WTC11 (cell line): ENCODE measurements at regions of chr3 and their contacts with region 1.

Region 1: GRCh38 chr3:39126532-39127071 is 19.1 kb downstream of the TTC21A start:
- DNase-seq: peak; percentile 60
- ATAC-seq: peak; percentile 84
- H3K4me3 Mint-ChIP-seq: no peak overlapping the region
- H3K27ac Mint-ChIP-seq: no peak overlapping the region
- H3K4me1 Mint-ChIP-seq: peaks cover 5% of the 10 kb centered on the region; the same call in 1 of the 2 replicates
- H3K27me3 Mint-ChIP-seq: no peaks in the 10 kb centered on the region
- CTCF ChIP-seq: no peak

Region 2: DNA sequence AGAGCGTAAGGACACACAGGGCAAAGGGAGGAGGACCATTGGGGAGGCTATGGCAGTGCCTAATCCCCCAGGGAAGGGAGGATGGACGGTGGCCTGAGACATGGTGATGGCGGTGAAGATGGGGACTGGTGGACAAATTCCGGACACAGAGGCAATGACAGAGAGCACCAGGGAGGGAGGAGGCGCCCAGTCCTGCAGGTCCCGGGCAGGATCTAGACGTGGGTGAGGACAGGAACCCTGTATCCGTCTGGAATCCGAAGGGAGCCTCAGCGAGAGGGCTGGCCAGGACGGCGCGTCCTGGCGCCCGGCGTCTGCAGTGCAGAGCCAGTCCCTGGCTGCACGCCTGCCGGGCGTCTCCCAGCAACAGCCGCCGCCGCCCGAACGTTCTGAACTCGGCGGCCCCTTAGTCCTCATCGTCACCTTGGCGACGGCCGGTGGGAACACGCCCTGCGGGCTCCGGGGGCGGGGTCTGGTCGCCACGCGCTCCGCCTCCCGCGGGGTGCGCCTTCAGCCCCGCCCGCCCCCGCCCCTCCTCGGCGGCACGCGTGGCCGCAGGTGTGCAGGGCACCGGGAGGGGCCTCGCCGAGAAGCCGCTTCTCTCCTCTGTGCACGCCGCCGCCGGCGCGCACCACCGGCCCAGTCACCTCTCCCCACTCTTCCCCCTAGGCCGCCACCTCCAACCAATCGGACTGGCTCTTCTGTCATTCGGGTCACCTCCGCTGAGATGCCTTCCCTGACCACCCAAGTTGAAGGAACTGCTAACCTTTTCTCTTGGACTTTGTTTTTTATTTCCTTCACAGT is 54.1 kb after region 1 on chr3:
- CTCF ChIA-PET with region 1: interaction called, 72 read pairs
- POLR2A ChIA-PET with region 1: interaction called, 6 read pairs
- DNase-seq: peak; percentile 87
- ATAC-seq: peak; percentile 86
- H3K4me3 Mint-ChIP-seq: peak overlapping the region; percentile 72
- H3K27ac Mint-ChIP-seq: peak overlapping the region; percentile 96
- H3K4me1 Mint-ChIP-seq: peaks cover 35% of the 10 kb centered on the region
- H3K27me3 Mint-ChIP-seq: peaks cover 22% of the 10 kb centered on the region
- CTCF ChIP-seq: no peak

Region 3: DNA sequence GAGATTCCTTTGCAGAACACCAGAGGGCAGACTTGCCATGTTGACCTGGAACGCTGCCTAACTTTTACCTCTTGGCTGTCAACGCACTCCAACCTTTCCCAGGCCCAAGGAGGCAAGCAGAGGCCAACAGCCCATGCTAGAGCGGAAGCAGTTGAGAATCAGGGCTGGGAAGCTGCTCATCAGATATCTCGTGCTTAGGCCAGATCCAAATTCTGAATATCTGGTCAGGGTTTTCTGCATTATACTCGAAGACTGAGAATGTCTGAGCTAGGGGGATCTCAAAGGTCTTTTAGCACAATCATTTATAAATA is 63.3 kb after region 1 on chr3:
- CTCF ChIA-PET with region 1: interaction called, 72 read pairs
- POLR2A ChIA-PET with region 1: interaction called, 3 read pairs
- DNase-seq: peak; percentile 73
- ATAC-seq: peak; percentile 85
- H3K4me3 Mint-ChIP-seq: no peak overlapping the region
- H3K27ac Mint-ChIP-seq: no peak overlapping the region
- H3K4me1 Mint-ChIP-seq: 0 out of 2 replicates have a peak, but pooled peaks cover 4% of the 10 kb centered on the region
- H3K27me3 Mint-ChIP-seq: no peaks in the 10 kb centered on the region; the same call in 1 of the 2 replicates
- CTCF ChIP-seq: peak; percentile 63; the same call in 1 of the 2 replicates

Region 4: DNA sequence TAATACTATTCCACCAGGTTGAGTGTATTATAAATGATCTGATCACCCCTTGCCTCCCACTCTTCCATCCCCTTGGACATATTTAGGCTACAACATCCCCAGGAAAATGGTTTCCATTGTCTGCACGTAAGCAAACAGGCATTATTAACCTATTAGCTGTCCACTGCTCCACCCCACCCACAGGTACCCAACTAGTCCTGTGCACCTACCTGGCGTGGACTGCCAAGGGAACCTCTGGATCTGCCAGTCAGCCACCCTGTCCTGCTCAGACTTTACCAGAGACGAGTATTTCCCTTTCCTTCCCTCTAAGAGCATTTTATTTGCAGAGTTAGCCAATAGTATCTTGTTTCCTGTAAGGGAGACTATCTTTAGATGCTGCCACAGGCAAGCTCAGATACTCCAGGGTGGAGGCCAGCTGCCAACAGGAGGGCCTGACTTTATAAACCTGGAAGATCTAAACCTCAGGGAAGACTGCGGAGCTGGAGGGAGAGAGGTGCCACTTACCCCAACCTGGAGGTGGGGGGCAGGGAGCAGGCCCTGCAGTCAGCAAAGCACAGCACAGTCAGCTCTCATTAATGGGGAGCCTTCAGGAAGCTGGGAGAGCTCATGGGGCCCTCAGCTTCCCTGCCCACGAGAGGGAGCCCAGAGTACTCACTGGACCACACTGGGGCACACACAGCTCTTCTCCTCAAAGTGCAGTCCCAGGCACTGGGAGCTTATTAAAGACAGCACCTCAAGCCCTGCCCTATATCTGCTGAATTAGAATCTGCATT is 153.3 kb after region 1 on chr3 and contains the start of gene CX3CR1:
- CTCF ChIA-PET with region 1: interaction called, 12 read pairs
- POLR2A ChIA-PET with region 1: no interaction called
- DNase-seq: no peak
- ATAC-seq: no peak
- H3K4me3 Mint-ChIP-seq: no peak within 1 kb of the TSS
- H3K27ac Mint-ChIP-seq: no peak within 1 kb of the TSS
- H3K4me1 Mint-ChIP-seq: peaks cover 5% of the 10 kb centered on the region
- H3K27me3 Mint-ChIP-seq: no peaks in the 10 kb centered on the region
- CTCF ChIP-seq: no peak
- total RNA-seq, gene CX3CR1: 0.07 to 0.37 TPM (median 0.11 TPM) in 3 replicates

Region 5: GRCh38 chr3:39327746-39328349 is 201.2 kb after region 1 on chr3:
- CTCF ChIA-PET with region 1: no interaction called
- POLR2A ChIA-PET with region 1: no interaction called
- DNase-seq: no peak
- ATAC-seq: no peak
- H3K4me3 Mint-ChIP-seq: no peak overlapping the region
- H3K27ac Mint-ChIP-seq: no peak overlapping the region
- H3K4me1 Mint-ChIP-seq: peaks cover 19% of the 10 kb centered on the region
- H3K27me3 Mint-ChIP-seq: no peaks in the 10 kb centered on the region
- CTCF ChIP-seq: no peak

Region 6: GRCh38 chr3:39378088-39378487 is 251.5 kb after region 1 on chr3:
- CTCF ChIA-PET with region 1: interaction called, 20 read pairs
- POLR2A ChIA-PET with region 1: no interaction called
- DNase-seq: peak; percentile 71
- ATAC-seq: peak; percentile 89
- H3K4me3 Mint-ChIP-seq: no peak overlapping the region
- H3K27ac Mint-ChIP-seq: peak overlapping the region; percentile 46; the same call in 1 of the 2 replicates
- H3K4me1 Mint-ChIP-seq: peaks cover 33% of the 10 kb centered on the region
- H3K27me3 Mint-ChIP-seq: no peaks in the 10 kb centered on the region
- CTCF ChIP-seq: peak; percentile 42